HCT116 (cell line): ENCODE measurements at regions of chr9 and their contacts with region 1.

Region 1: GRCh38 chr9:124593651-124594058 is 86.5 kb upstream of the NR5A1 start:
- DNase-seq: no peak
- ATAC-seq: no peak
- H3K4me3 ChIP-seq: no peak overlapping the region
- H3K27ac ChIP-seq: no peak overlapping the region
- H3K4me1 ChIP-seq: peaks cover 4 to 35% of the 10 kb centered on the region in 2 experiments; a peak in 3 of 4 replicates
- H3K27me3 ChIP-seq: no peaks in the 10 kb centered on the region
- CTCF ChIP-seq: no peak
- POLR2A ChIP-seq: no peak
- RAD21 ChIP-seq: no peak

Region 2: GRCh38 chr9:123149067-123149466 is 1444.6 kb before region 1 on chr9:
- CTCF ChIA-PET with region 1: no interaction called
- POLR2A ChIA-PET with region 1: no interaction called
- RAD21 ChIA-PET with region 1: no interaction called
- intact Hi-C with region 1: loop called (anchors 10 kb)
- DNase-seq: no peak
- ATAC-seq: no peak
- H3K4me3 ChIP-seq: no peak overlapping the region
- H3K27ac ChIP-seq: no peak overlapping the region
- H3K4me1 ChIP-seq: no peaks in the 10 kb centered on the region
- H3K27me3 ChIP-seq: no peaks in the 10 kb centered on the region
- CTCF ChIP-seq: no peak
- POLR2A ChIP-seq: no peak
- RAD21 ChIP-seq: no peak